Right lobe of liver (tissue), 6 donors: ENCODE measurements at regions of chr1 and their contacts with region 1.

Region 1: GRCh38 chr1:203273206-203273868 is 32.0 kb upstream of the BTG2 start:
- DNase-seq: peak; percentile 86 to 92 (median 90)
- ATAC-seq: peak; percentile 87 to 90 (median 88)
- H3K4me3 ChIP-seq: peak overlapping the region in 2 of 3 donors; percentile 12 to 17
- H3K27ac ChIP-seq: peak overlapping the region in 2 of 3 donors; percentile 43 to 63
- H3K4me1 ChIP-seq: peaks cover 0 to 7% (median 0%) of the 10 kb centered on the region in 4 donors
- H3K27me3 ChIP-seq: no peaks in the 10 kb centered on the region
- CTCF ChIP-seq: peak; percentile 97 to 99 (median 98)
- POLR2A ChIP-seq: no peak

Region 2: DNA sequence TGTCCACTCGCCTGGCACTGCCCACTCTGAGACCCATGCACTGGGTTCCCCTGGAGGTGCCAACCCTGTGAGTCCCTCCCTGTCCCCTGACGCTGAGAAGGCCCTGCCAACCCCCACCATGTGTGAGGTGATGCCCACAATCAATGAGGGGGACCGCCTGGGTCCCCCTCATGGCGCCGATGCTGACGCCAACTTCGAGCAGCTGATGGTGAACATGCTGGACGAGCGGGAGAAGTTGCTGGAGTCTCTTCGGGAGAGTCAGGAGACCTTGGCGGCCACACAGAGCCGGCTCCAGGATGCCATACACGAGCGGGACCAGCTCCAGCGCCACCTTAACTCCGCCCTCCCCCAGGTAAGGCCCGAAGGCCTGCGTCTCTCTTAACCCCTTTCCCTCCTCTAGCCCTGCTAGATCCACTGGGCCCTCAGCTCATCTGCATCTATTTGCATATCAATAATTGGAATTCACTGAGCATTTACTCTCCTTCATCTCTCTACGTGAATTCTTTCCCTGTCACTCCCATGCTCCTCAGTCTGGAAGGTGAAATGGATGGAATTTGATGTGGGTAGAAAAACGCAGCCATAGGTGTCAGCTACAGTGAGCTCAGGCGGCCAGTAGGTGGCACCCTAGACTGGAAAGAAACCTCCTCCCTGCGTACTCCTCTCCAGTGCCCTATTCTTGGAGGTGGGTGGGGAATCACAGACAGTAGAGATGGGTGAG is 234.3 kb before region 1 on chr1:
- intact Hi-C with region 1: loop called in 1 of 2 experiments (anchors 5 kb)
- DNase-seq: peak; percentile 72 to 78 (median 72)
- ATAC-seq: peak; percentile 89 to 94 (median 91)
- H3K4me3 ChIP-seq: no peak overlapping the region
- H3K27ac ChIP-seq: no peak overlapping the region
- H3K4me1 ChIP-seq: no peaks in the 10 kb centered on the region
- H3K27me3 ChIP-seq: no peaks in the 10 kb centered on the region
- CTCF ChIP-seq: peak; percentile 87 to 91 (median 90)
- POLR2A ChIP-seq: no peak

Region 3: DNA sequence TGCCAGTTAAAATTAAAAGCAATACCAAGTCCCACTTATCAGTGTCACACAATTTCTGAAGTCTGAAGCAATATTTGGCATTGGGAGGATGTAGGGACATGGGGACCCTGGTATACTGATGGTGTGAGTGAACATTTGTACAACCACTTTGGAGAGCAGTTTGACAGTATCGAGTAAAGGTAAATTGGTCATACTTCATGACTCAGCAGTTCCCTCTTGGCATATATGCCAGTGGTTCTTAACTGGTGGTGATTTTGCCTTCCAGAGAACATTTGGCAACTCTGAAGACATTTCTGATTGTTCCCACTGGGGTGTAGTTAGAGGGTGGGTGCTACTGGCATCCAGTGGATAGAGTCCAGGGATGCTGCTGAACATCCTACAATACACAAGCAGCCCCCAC is 57.9 kb after region 1 on chr1:
- intact Hi-C with region 1: loop called (anchors 5 kb)
- DNase-seq: no peak
- ATAC-seq: no peak
- H3K4me3 ChIP-seq: no peak overlapping the region
- H3K27ac ChIP-seq: no peak overlapping the region
- H3K4me1 ChIP-seq: peaks cover 0 to 6% (median under 1%) of the 10 kb centered on the region in 4 donors
- H3K27me3 ChIP-seq: no peaks in the 10 kb centered on the region
- CTCF ChIP-seq: no peak
- POLR2A ChIP-seq: no peak

Region 4: DNA sequence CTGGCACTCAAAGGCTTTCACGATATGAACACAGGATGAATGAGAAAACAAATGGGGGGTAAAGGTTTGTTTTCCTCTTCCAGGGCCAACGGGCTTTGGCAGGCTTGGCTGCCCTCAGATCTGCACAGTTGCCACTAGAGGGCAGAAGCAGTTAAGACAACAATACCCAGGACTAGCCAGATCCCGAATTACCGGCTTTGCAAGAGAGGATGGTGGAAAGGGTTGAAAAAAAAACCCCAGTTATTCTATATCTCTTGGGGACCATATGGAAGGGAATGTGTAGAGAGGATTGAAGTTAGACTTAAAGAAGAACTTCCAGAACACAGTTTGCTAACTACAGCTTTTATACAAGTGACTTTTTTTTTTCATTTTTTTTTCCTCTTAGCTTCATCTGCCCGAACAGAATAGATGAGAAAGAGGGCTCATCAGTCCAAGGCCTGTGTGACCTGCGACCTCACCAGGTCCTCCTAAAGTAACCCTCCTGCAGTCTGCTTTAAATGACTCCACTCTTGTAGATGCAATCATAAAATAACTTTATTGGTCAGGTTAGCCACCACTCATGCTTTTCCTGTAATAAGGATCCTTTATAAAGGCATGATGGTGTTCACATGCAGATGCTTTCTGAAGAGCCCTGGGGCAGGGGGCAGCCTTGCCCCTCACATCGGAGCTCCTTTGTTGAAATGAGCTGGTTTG is 66.9 kb after region 1 on chr1:
- intact Hi-C with region 1: loop called in 1 of 2 experiments (anchors 5 kb)
- DNase-seq: peak; percentile 62 to 83 (median 75)
- ATAC-seq: peak; percentile 92 to 95 (median 94)
- H3K4me3 ChIP-seq: no peak overlapping the region
- H3K27ac ChIP-seq: no peak overlapping the region
- H3K4me1 ChIP-seq: peaks cover 0 to 18% (median 2%) of the 10 kb centered on the region in 4 donors
- H3K27me3 ChIP-seq: no peaks in the 10 kb centered on the region
- CTCF ChIP-seq: peak; percentile 86 to 95 (median 92)
- POLR2A ChIP-seq: no peak

Region 5: DNA sequence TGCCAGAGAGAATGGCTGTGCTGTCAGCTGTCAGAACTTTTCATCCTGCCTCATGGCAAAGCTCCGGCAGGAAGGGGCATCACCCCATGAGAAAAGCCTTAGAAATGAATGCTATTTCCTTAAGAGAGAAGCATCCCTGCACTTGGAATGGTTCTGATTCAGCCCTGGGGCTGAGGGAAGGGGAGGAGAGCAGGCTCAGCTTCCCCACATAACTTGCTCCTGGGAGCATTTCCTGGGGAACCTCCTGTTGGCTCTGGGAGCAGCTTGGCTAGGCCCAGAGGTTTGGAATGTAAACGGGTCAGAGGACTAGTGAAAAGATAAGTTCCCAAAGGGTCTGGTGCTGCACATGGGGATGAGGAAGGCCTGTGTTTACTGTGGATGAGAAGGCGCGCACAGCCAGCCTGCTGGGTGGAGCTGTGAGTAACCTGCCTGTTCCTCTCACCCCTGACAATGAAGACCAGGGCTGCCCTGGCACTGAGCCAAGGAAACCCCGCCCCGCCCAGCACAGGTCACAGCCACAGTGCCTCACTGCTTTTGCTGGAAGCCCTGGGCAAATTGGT is 207.3 kb after region 1 on chr1:
- intact Hi-C with region 1: loop called in 1 of 2 experiments (anchors 10 kb)
- DNase-seq: peak in 1 of 3 donors; percentile 55
- ATAC-seq: peak; percentile 36 to 54 (median 53)
- H3K4me3 ChIP-seq: no peak overlapping the region
- H3K27ac ChIP-seq: peak overlapping the region in 1 of 3 donors; percentile 26
- H3K4me1 ChIP-seq: no peaks in the 10 kb centered on the region
- H3K27me3 ChIP-seq: no peaks in the 10 kb centered on the region
- CTCF ChIP-seq: no peak
- POLR2A ChIP-seq: no peak